ENCODE measurements at regions of chr3 and their contacts with region 1.

Region 1: DNA sequence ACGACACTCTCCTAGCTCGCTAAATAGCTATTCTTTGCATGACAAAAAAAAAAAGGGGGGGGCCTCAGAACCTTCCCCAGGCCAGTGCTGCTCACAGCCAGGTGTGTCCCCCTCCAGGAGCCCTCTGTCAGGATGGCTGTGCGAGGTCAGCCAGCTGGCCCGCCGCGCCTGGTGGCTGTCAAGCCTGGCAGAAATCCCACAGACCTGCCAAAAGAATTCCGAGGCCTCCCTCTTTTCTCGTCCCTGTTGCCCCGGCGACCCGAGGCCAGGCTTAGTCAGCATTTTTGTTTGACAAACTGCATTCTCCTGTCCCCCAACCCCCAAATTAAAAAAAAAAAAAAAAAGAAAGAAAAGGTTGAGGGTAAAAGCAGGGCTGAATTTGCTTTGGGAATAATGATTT is 61.9 kb downstream of the TM4SF4 start:
- DNase-seq: no peak
- ATAC-seq: no peak
- H3K4me3 ChIP-seq: no peak overlapping the region
- H3K27ac ChIP-seq: no peak overlapping the region
- H3K4me1 ChIP-seq: peaks cover 12% of the 10 kb centered on the region
- H3K27me3 ChIP-seq: no peaks in the 10 kb centered on the region
- CTCF ChIP-seq: no peak
- EP300 ChIP-seq: no peak
- POLR2A ChIP-seq: no peak
- RAD21 ChIP-seq: no peak

Region 2: GRCh38 chr3:148847351-148847750 is 689.1 kb before region 1 on chr3:
- CTCF ChIA-PET with region 1: no interaction called
- POLR2A ChIA-PET with region 1: no interaction called
- RAD21 ChIA-PET with region 1: no interaction called
- SMC1A ChIA-PET with region 1: no interaction called
- in situ Hi-C with region 1: no loop called
- intact Hi-C with region 1: no loop called
- DNase-seq: no peak
- ATAC-seq: no peak
- H3K4me3 ChIP-seq: no peak overlapping the region
- H3K27ac ChIP-seq: no peak overlapping the region
- H3K4me1 ChIP-seq: no peaks in the 10 kb centered on the region
- H3K27me3 ChIP-seq: no peaks in the 10 kb centered on the region
- CTCF ChIP-seq: no peak
- EP300 ChIP-seq: no peak
- POLR2A ChIP-seq: no peak
- RAD21 ChIP-seq: no peak

Region 3: GRCh38 chr3:149512209-149512782 is 24.1 kb before region 1 on chr3:
- CTCF ChIA-PET with region 1: interaction called, 51 read pairs
- POLR2A ChIA-PET with region 1: no interaction called
- RAD21 ChIA-PET with region 1: no interaction called
- SMC1A ChIA-PET with region 1: interaction called, 4 read pairs
- in situ Hi-C with region 1: no loop called
- intact Hi-C with region 1: no loop called
- DNase-seq: no peak
- ATAC-seq: peak; percentile 92
- H3K4me3 ChIP-seq: no peak overlapping the region
- H3K27ac ChIP-seq: no peak overlapping the region
- H3K4me1 ChIP-seq: no peaks in the 10 kb centered on the region; the same call in 1 of the 2 replicates
- H3K27me3 ChIP-seq: no peaks in the 10 kb centered on the region
- CTCF ChIP-seq: peak; percentile 81 to 85 (median 84); a peak in 5 of 6 replicates
- EP300 ChIP-seq: no peak
- POLR2A ChIP-seq: no peak
- RAD21 ChIP-seq: peak; percentile 93

Region 4: DNA sequence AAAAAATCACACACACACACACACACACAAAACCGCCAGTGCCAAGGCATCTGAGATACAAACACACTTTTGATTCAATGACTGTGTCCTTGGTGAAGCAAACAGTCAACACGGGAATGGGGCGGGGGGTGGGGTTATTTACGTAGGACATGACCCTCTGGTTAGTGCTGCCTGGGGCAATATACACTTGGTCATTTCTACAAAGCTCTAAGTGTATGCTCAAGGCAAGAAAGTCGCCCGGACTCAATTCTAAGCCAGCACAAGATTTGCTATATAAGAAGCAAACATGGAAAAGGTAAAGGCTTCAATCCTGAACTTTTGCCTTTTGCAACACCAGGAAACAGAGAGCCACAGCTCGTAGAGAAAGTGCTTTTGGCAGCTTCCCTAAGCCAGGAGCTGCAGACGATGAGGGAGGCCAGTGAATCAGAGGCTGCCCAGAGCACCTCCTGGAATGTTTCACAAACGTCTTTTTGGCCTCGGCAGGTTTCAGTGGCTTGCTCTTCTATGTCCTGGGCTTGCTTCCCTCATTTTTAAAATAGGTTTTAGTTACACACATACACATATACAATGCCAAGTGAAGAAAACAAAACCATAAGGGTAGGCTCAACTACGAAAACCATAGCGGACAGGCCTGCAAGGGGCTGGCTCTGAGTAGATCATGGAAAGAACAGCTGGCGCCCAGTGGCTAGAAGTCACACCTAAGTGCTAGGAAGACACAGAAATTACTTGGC is 11.7 kb after region 1 on chr3:
- CTCF ChIA-PET with region 1: interaction called, 12 read pairs
- POLR2A ChIA-PET with region 1: interaction called, 3 read pairs
- RAD21 ChIA-PET with region 1: interaction called, 4 read pairs
- SMC1A ChIA-PET with region 1: interaction called, 6 read pairs
- in situ Hi-C with region 1: no loop called
- intact Hi-C with region 1: no loop called
- DNase-seq: no peak
- ATAC-seq: no peak
- H3K4me3 ChIP-seq: no peak overlapping the region
- H3K27ac ChIP-seq: no peak overlapping the region
- H3K4me1 ChIP-seq: peaks cover 9% of the 10 kb centered on the region
- H3K27me3 ChIP-seq: no peaks in the 10 kb centered on the region
- CTCF ChIP-seq: no peak
- EP300 ChIP-seq: no peak
- POLR2A ChIP-seq: no peak
- RAD21 ChIP-seq: no peak

Region 5: GRCh38 chr3:149581681-149582370 is 45.4 kb after region 1 on chr3:
- CTCF ChIA-PET with region 1: interaction called, 8 read pairs
- POLR2A ChIA-PET with region 1: interaction called, 3 read pairs
- RAD21 ChIA-PET with region 1: interaction called, 26 read pairs
- SMC1A ChIA-PET with region 1: interaction called, 29 read pairs
- in situ Hi-C with region 1: no loop called
- intact Hi-C with region 1: no loop called
- DNase-seq: no peak
- ATAC-seq: peak; percentile 57
- H3K4me3 ChIP-seq: peak overlapping the region; percentile 52; the same call in 1 of the 2 replicates
- H3K27ac ChIP-seq: peak overlapping the region; percentile 63
- H3K4me1 ChIP-seq: peaks cover 73% of the 10 kb centered on the region
- H3K27me3 ChIP-seq: no peaks in the 10 kb centered on the region
- CTCF ChIP-seq: no peak
- EP300 ChIP-seq: 0 out of 4 replicates have a peak, but pooled peaks of 1 of the 2 experiments have one; percentile 21
- POLR2A ChIP-seq: no peak
- RAD21 ChIP-seq: no peak

Region 6: GRCh38 chr3:149702691-149703441 is 166.4 kb after region 1 on chr3:
- CTCF ChIA-PET with region 1: interaction called, 11 read pairs
- POLR2A ChIA-PET with region 1: no interaction called
- RAD21 ChIA-PET with region 1: no interaction called
- SMC1A ChIA-PET with region 1: interaction called, 11 read pairs
- in situ Hi-C with region 1: no loop called
- intact Hi-C with region 1: no loop called
- DNase-seq: no peak
- ATAC-seq: peak; percentile 64
- H3K4me3 ChIP-seq: no peak overlapping the region
- H3K27ac ChIP-seq: no peak overlapping the region
- H3K4me1 ChIP-seq: no peaks in the 10 kb centered on the region
- H3K27me3 ChIP-seq: no peaks in the 10 kb centered on the region
- CTCF ChIP-seq: no peak
- EP300 ChIP-seq: no peak
- POLR2A ChIP-seq: no peak
- RAD21 ChIP-seq: no peak

Region 7: GRCh38 chr3:149771652-149772271 is 235.3 kb after region 1 on chr3:
- CTCF ChIA-PET with region 1: interaction called, 128 read pairs
- POLR2A ChIA-PET with region 1: no interaction called
- RAD21 ChIA-PET with region 1: interaction called, 11 read pairs
- SMC1A ChIA-PET with region 1: interaction called, 34 read pairs
- in situ Hi-C with region 1: no loop called
- intact Hi-C with region 1: no loop called
- DNase-seq: no peak
- ATAC-seq: peak; percentile 93
- H3K4me3 ChIP-seq: no peak overlapping the region
- H3K27ac ChIP-seq: no peak overlapping the region
- H3K4me1 ChIP-seq: no peaks in the 10 kb centered on the region
- H3K27me3 ChIP-seq: no peaks in the 10 kb centered on the region; a peak in 1 of 4 replicates
- CTCF ChIP-seq: peak; percentile 79 to 83 (median 79)
- EP300 ChIP-seq: no peak
- POLR2A ChIP-seq: no peak
- RAD21 ChIP-seq: peak; percentile 72

Measured in GM12878 (cell line).